OCI-LY7 (cell line): ENCODE measurements at regions of chr1 and their contacts with region 1.

Region 1: DNA sequence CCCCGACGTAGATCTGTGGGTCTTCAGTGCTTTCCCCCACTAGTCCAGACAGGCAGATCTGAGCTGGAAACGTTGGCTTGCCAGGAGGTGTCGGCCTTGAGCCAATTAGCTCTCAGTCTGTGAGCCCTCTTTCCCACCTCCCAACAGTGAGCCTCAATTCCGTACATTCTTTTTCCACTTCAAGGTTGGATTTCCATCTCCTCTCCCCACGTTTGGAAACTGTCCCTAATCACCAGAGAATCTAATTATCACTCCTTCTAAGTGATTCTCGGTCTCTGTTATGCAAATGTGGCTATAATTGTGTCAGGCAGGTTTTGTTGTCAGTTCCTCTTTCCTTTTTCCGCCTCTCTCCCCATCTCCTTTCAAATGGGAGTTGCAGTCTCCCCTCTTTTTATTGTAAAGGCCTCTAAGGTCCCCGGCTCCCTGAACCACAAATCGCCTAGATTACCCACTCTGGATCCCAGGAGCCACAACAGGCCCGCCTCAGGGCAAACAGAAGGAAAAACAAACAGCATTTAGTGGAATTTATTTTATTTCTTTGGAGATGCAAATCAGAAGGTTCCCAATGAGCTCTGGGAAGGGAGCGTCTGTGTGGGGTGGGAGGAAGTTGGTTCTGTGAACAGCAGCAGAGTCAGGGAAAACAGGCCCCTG is 29.4 kb upstream of the LRRN2 start:
- DNase-seq: peak; percentile 65
- H3K4me3 ChIP-seq: peak overlapping the region; percentile 62
- H3K27ac ChIP-seq: peak overlapping the region; percentile 62
- H3K4me1 ChIP-seq: peaks cover 72% of the 10 kb centered on the region
- CTCF ChIP-seq: peak; percentile 73

Region 2: GRCh38 chr1:204114606-204115005 is 600.4 kb before region 1 on chr1:
- CTCF ChIA-PET with region 1: no interaction called
- POLR2A ChIA-PET with region 1: no interaction called
- intact Hi-C with region 1: no loop called
- DNase-seq: no peak
- H3K4me3 ChIP-seq: no peak overlapping the region
- H3K27ac ChIP-seq: no peak overlapping the region
- H3K4me1 ChIP-seq: peaks cover 9% of the 10 kb centered on the region
- CTCF ChIP-seq: no peak

Region 3: DNA sequence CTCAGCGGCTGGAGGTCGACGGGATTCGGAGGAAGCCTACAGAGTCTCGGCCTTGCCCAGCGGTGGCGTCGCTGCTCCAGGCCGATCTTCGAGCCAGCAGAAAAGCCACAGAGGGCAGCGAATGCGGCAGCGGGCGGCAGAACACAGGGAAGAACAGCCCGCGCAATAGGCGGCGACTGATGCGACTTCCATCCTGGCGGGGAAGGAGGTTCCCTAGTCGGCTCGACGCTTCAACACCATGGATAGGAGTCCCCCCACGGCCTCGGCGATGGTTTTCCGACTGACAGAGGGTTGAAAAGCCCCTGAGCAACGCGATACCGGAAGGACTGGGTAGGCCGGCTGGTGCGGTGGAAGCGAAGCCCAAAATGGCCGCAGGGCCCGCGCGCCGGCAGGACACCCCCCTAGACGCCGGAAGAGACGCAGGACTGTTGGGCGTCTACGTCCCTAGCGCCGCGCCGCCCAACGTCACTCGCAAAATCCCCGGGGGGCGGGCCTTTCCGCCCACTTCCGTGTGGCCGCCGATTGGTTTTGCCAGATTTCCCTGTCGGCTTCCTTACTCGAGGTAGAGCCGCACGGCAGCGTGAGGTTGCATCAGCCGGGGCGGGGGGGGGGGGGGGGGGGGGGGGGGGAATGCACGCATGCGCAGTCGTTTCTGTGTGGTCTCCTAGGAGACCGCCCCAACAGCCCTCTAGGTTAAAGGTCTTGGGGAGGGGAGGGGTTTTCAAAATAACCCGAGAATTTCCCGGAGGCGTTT is 303.4 kb before region 1 on chr1 and contains the start of gene PPP1R15B:
- CTCF ChIA-PET with region 1: no interaction called
- POLR2A ChIA-PET with region 1: no interaction called
- intact Hi-C with region 1: loop called (anchors 10 kb)
- DNase-seq: peak; percentile 99
- H3K4me3 ChIP-seq: peak within 1 kb of the TSS; percentile 98
- H3K27ac ChIP-seq: peak within 1 kb of the TSS; percentile 79
- H3K4me1 ChIP-seq: peaks cover 19% of the 10 kb centered on the region
- CTCF ChIP-seq: no peak
- total RNA-seq, gene PPP1R15B: 63.5 and 72.6 TPM in 2 replicates

Region 4: DNA sequence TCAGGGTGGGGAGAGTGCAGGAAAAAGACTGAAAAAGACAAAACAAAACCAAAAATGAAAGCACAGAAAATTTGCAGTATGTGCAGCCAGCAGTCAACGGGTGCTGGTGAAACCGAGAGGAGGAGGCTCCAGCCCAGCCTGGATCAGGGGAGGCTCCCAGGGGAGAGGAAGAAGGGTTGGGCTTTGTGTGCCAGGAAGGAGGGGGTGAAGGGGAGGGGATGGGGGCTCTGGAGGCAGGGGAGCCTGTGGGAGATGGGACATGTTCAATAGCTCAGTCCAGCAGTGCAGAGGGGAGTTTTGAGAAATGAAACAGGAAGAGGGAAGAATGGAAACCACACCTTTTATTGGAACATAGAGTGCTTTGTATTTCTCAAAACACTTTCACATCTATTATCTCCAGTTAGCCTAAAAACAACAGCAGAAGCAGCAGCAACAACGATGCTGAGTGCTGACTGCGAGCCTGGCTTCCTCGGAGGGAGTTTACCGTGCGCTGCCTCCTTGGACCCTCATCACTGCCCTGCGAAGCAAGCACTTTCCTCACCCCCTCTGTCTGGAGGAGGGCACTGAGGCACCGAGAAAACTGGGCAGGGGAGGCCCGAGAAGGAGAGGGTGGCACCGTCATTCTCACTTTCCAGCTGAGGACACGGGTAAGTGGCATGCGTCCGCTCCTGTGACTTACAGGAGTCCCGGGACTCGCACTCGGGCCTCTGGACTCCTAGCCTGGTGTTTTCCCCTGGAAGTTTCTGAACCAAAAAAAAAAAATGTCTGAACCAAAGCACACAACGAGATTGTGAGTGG is 135.9 kb before region 1 on chr1:
- CTCF ChIA-PET with region 1: no interaction called
- POLR2A ChIA-PET with region 1: no interaction called
- intact Hi-C with region 1: loop called (anchors 1 kb)
- DNase-seq: peak; percentile 68
- H3K4me3 ChIP-seq: peak overlapping the region; percentile 64
- H3K27ac ChIP-seq: peak overlapping the region; percentile 77
- H3K4me1 ChIP-seq: peaks cover 55% of the 10 kb centered on the region
- CTCF ChIP-seq: no peak

Region 5: GRCh38 chr1:204651843-204652421 is 63.1 kb before region 1 on chr1:
- CTCF ChIA-PET with region 1: no interaction called
- POLR2A ChIA-PET with region 1: no interaction called
- intact Hi-C with region 1: no loop called
- DNase-seq: no peak
- H3K4me3 ChIP-seq: no peak overlapping the region
- H3K27ac ChIP-seq: no peak overlapping the region
- H3K4me1 ChIP-seq: no peaks in the 10 kb centered on the region
- CTCF ChIP-seq: no peak

Region 6: DNA sequence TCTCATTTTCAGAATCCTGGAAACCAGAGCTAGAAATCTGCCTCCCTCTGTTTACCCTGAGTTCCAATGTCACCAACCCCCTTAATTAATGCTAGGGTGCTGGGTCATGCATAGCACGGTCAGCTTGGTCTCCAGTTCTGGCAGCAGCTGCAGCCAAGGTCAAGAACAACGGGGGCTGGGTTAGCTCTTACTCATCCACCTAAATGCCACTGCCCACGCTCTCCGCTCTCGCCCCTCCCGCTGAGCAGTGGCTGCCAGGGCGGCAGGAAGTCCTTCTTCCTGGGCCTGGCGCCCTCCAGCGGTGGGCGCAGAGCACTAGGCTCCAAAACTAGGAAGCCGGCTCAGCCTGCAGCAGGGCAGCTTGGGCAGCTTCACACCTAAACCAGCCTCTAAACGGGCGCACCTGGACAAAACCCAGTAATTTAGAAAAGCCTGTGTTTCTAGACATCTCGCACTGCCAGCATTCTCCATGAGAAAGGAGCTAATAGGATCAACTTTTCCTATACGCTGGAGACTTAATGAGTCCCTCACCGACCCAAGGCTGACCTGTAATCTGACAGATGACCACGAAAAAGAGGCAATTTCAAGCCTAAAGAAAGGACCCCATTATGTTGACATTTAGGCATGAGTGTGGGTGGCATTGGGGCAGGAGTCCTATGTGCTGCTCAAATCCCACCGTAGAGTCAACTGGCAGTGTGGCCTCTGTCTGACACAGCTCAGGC is 48.9 kb after region 1 on chr1:
- CTCF ChIA-PET with region 1: interaction called, 4 read pairs
- POLR2A ChIA-PET with region 1: no interaction called
- intact Hi-C with region 1: loop called (anchors 1 kb)
- DNase-seq: peak; percentile 83
- H3K4me3 ChIP-seq: no peak overlapping the region
- H3K27ac ChIP-seq: no peak overlapping the region
- H3K4me1 ChIP-seq: peaks cover 5% of the 10 kb centered on the region
- CTCF ChIP-seq: peak; percentile 86